Calu3 (cell line): ENCODE measurements at regions of chr5 and their contacts with region 1.

Region 1: GRCh38 chr5:91499943-91500531 is 116.9 kb upstream of the ARRDC3 start:
- DNase-seq: peak; percentile 7
- H3K4me3 Mint-ChIP-seq: no peak overlapping the region
- H3K27ac Mint-ChIP-seq: no peak overlapping the region
- H3K4me1 Mint-ChIP-seq: no peaks in the 10 kb centered on the region
- H3K27me3 Mint-ChIP-seq: no peaks in the 10 kb centered on the region
- CTCF ChIP-seq: peak; percentile 65

Region 2: GRCh38 chr5:91635950-91636734 is 136.1 kb after region 1 on chr5:
- CTCF ChIA-PET with region 1: no interaction called
- intact Hi-C with region 1: loop called (anchors 5 kb)
- DNase-seq: no peak
- H3K4me3 Mint-ChIP-seq: no peak overlapping the region
- H3K27ac Mint-ChIP-seq: no peak overlapping the region
- H3K4me1 Mint-ChIP-seq: no peaks in the 10 kb centered on the region
- H3K27me3 Mint-ChIP-seq: no peaks in the 10 kb centered on the region
- CTCF ChIP-seq: no peak